ENCODE measurements at regions of chr2 and their contacts with region 1.

Region 1: GRCh38 chr2:102240640-102241370 is 54.0 kb downstream of the IL1RL2 start:
- DNase-seq: peak; percentile 94
- ATAC-seq: peak; percentile 94
- H3K4me3 Mint-ChIP-seq: peak overlapping the region; percentile 15
- H3K27ac Mint-ChIP-seq: peak overlapping the region; percentile 84
- H3K4me1 Mint-ChIP-seq: peaks cover 42% of the 10 kb centered on the region
- H3K27me3 Mint-ChIP-seq: no peaks in the 10 kb centered on the region

Region 2: DNA sequence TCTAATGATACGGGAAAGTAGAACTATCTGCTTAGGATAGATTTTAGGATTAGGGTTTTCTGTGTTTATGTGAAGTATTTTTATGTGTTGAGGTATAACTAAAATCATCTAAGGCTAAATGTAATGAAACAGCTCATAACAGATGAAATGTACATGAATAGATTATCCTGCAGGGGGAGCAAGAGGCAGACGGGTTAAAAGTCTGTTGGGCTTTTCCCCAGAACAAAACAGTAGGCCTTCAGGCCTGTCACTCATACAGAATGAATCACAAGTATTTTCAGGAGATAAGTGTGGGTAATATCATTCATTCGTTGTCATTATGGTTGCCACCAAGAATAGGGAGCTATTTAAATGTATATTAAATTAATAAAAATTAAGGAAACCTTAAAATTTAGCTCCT is 356.9 kb before region 1 on chr2:
- CTCF ChIA-PET with region 1: interaction called, 70 read pairs
- POLR2A ChIA-PET with region 1: interaction called, 3 read pairs
- intact Hi-C with region 1: loop called (anchors 1 to 2 kb)
- DNase-seq: peak; percentile 67
- ATAC-seq: peak; percentile 90
- H3K4me3 Mint-ChIP-seq: no peak overlapping the region
- H3K27ac Mint-ChIP-seq: peak overlapping the region; percentile 12
- H3K4me1 Mint-ChIP-seq: peaks cover 18% of the 10 kb centered on the region
- H3K27me3 Mint-ChIP-seq: no peaks in the 10 kb centered on the region

Region 3: DNA sequence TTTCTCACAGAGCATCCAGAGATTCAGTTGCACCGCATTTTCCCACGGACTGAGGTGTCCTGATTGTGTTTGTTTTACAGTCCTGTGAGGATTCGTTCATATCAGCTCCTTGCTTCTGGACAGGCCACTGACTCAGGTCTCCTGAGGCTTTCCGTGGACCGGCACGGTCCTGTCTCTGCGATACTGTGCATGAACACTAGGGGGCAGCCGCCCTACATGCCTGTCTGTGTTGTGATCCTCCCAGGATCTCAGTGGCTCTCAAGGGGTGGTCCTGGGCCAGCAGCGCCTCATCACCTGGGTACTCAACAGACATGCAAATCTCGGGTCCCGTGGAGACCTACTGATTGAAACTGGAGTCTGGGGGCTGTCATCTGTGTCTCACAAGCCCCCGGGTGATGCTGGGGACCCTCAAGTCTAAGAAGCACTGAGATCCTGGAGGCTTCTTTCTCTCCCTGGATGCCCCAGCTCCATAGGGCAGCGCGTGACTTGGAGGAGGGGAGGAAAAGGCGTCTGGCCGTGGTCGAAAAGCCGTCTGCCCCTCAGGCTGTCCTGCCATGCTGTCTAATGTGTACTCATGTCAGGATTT is 220.1 kb before region 1 on chr2:
- CTCF ChIA-PET with region 1: interaction called, 71 read pairs
- POLR2A ChIA-PET with region 1: no interaction called
- intact Hi-C with region 1: loop called (anchors 1 kb)
- DNase-seq: peak; percentile 92
- ATAC-seq: peak; percentile 84
- H3K4me3 Mint-ChIP-seq: no peak overlapping the region
- H3K27ac Mint-ChIP-seq: peak overlapping the region; percentile 68
- H3K4me1 Mint-ChIP-seq: peaks cover 53% of the 10 kb centered on the region
- H3K27me3 Mint-ChIP-seq: peaks cover 2% of the 10 kb centered on the region

Region 4: DNA sequence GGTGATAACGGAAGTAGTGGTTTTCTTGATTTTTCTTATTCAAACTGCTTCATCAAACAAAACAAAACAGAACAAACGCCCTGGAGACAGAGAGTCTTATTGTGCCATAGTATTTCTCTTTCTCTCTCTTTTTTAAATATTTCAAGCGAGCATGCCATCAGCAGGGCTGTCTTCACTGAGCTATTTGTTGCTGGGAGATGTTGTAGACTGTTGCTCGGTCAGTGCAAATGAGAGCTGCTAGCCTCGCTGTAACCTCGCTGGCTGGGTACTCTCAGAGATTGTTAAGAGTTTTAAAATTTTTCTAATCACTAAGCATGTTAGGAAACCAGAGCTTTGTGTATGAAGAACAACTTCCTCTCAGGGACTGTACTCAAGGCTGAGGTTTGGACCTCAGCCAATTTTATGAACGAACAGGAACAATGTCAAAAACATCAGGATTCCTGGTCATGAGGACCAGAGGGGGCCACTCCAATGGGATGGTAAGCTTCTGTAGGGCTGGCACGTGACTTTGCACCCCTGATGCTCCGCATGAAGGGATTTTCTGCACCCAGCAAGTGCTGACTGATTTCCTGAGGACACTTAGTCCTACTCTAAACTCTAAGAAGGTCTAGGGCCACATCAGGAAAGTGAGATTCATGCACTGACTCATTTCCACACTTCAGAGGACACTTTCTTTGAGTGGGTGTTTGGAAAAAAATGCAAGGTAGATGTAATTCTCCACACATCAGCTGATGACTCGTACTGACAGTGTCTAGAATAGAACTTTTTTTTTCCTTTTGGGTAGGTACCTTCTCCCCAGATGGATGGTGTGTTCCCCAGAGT is 158.0 kb before region 1 on chr2:
- CTCF ChIA-PET with region 1: interaction called, 13 read pairs
- POLR2A ChIA-PET with region 1: no interaction called
- intact Hi-C with region 1: loop called (anchors 5 kb)
- DNase-seq: peak; percentile 74
- ATAC-seq: peak; percentile 90
- H3K4me3 Mint-ChIP-seq: peak overlapping the region; percentile 50
- H3K27ac Mint-ChIP-seq: peak overlapping the region; percentile 93
- H3K4me1 Mint-ChIP-seq: peaks cover 74% of the 10 kb centered on the region
- H3K27me3 Mint-ChIP-seq: no peaks in the 10 kb centered on the region

Region 5: DNA sequence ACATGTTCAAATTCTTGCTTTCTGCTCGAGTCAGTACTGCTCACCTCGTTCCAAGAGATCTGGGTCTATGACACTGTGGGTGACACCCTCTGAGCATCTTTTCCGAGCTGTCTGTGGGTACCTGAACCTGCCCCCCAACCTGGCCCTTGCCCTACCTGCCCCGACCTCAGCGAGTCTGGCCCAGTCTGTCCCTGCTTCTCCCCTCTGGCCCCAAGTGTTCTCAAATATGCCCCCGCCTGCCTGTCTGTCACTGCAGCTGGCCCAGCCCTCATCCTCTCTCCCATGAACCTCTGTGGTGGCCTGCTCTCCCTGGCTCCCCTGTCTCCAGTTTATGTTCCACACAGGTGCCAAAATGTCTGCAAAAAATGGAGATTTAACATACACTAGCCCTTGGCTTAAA is 86.4 kb before region 1 on chr2:
- CTCF ChIA-PET with region 1: interaction called, 10 read pairs
- POLR2A ChIA-PET with region 1: no interaction called
- intact Hi-C with region 1: no loop called
- DNase-seq: no peak
- ATAC-seq: no peak
- H3K4me3 Mint-ChIP-seq: no peak overlapping the region
- H3K27ac Mint-ChIP-seq: no peak overlapping the region
- H3K4me1 Mint-ChIP-seq: peaks cover 10% of the 10 kb centered on the region
- H3K27me3 Mint-ChIP-seq: no peaks in the 10 kb centered on the region

Region 6: DNA sequence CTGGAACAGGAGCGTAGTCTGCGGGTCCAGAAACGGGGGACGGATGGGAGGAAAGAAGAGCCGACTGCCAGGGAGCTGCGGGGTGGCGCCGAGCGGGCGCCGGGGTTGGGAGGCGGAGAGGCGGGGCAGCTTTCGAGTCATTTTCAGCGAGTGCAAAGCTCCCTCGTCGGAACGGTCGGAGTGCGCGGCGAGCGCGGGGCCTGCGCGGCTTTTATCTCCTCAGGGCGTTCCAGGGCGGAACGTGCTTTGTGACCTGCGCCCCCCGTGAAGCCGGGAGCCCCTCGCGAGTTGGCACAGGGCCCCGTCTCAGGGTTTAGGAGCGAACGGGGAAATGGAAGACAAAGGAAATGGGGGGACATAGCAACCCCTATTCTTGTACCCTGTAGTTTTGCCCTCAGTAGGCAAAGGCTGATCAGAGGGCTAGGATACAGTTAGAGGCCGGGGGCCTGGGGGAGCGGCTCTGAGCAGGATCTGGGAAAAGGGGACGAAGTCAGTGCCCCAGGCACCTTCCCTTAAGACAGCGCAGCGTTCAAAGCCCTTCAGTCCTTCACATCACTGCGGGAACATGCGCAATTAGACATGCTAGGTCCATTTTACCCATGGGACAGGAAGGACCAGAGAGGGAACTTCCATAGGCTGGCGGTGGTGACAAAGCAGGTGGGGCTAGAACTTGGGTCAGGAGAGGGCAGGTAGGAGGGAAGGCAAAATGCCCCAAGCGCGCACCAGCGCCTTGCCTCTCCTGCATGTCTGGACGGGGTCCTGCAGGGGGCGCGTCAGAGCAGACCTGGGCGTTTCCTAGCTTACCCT is 10.4 kb after region 1 on chr2:
- CTCF ChIA-PET with region 1: interaction called, 40 read pairs
- POLR2A ChIA-PET with region 1: interaction called, 3 read pairs
- intact Hi-C with region 1: no loop called
- DNase-seq: peak; percentile 85
- ATAC-seq: peak; percentile 68
- H3K4me3 Mint-ChIP-seq: peak overlapping the region; percentile 73
- H3K27ac Mint-ChIP-seq: peak overlapping the region; percentile 76
- H3K4me1 Mint-ChIP-seq: peaks cover 38% of the 10 kb centered on the region
- H3K27me3 Mint-ChIP-seq: no peaks in the 10 kb centered on the region

Region 7: DNA sequence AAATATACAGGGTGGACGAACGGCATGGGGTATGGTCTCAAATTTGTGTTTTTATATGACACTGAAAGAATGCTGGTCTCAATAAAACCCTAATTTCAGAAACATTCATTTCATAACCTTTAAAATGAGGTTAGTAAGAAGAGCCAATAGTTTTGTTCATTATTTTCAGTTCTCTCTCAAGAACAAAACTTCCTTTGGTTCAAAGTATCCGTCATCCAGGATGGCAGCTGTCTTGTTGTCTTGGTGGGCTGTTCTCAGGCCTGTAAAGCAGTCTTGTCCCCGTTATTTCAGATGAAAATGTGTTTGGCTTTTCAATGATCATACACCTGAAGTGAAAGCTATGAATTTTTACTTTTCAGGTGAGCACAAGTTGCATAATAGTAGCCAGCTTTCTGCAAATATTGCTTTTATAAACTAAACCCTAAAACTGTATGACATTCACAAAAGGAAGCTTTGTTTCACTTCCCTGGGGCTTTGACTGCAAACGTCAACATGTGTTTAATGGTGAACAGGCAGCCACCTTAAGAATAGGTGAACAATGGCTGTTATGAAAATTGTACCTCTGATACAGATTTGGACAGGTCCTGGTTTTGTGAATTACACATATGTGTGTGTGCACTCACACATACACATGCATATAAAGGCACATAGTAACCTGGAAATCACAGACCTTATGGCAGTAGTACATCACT is 184.8 kb after region 1 on chr2:
- CTCF ChIA-PET with region 1: no interaction called
- POLR2A ChIA-PET with region 1: no interaction called
- intact Hi-C with region 1: no loop called
- DNase-seq: no peak
- ATAC-seq: no peak
- H3K4me3 Mint-ChIP-seq: no peak overlapping the region
- H3K27ac Mint-ChIP-seq: no peak overlapping the region
- H3K4me1 Mint-ChIP-seq: peaks cover 52% of the 10 kb centered on the region
- H3K27me3 Mint-ChIP-seq: peaks cover 7% of the 10 kb centered on the region

Region 8: GRCh38 chr2:102487761-102488466 is 247.1 kb after region 1 on chr2:
- CTCF ChIA-PET with region 1: no interaction called
- POLR2A ChIA-PET with region 1: no interaction called
- intact Hi-C with region 1: no loop called
- DNase-seq: no peak
- ATAC-seq: no peak
- H3K4me3 Mint-ChIP-seq: no peak overlapping the region
- H3K27ac Mint-ChIP-seq: no peak overlapping the region
- H3K4me1 Mint-ChIP-seq: peaks cover 8% of the 10 kb centered on the region
- H3K27me3 Mint-ChIP-seq: peaks cover 23% of the 10 kb centered on the region

Measured in activated CD4-positive, alpha-beta T cell treated with anti-CD3 and anti-CD28 coated beads for 36 hours (primary cell).